ENCODE measurements at regions of chr10 and their contacts with region 1.

Region 1: GRCh38 chr10:78278058-78278404 is 244.4 kb downstream of the RPS24 start:
- DNase-seq: peak; percentile 54 to 93 (median 86)
- ATAC-seq: peak; percentile 95 to 98 (median 95)
- H3K4me3 ChIP-seq: no peak overlapping the region
- H3K27ac ChIP-seq: peak overlapping the region in 3 of 12 donors; percentile 60 to 64 (median 63)
- H3K4me1 ChIP-seq: peaks cover 0 to 6% (median 0%) of the 10 kb centered on the region in 12 donors
- H3K27me3 ChIP-seq: no peaks in the 10 kb centered on the region
- CTCF ChIP-seq: no peak
- POLR2A ChIP-seq: no peak

Region 2: GRCh38 chr10:78066012-78066411 is 212.0 kb before region 1 on chr10:
- intact Hi-C with region 1: loop called in 1 of 10 experiments (anchors 10 kb)
- DNase-seq: no peak
- ATAC-seq: no peak
- H3K4me3 ChIP-seq: no peak overlapping the region
- H3K27ac ChIP-seq: no peak overlapping the region
- H3K4me1 ChIP-seq: no peaks in the 10 kb centered on the region
- H3K27me3 ChIP-seq: no peaks in the 10 kb centered on the region
- CTCF ChIP-seq: no peak
- POLR2A ChIP-seq: no peak

Measured in heart left ventricle (tissue), 16 donors.